Dendritic cell treated with granulocyte-macrophage colony-stimulating factor and Interleukin-4, amounts not matched to agents 40 ng/mL and 50 ng/mL, for 4 days (primary cell): ENCODE measurements at regions of chr10 and their contacts with region 1.

Region 1: GRCh38 chr10:48608279-48608681 is 3.4 kb upstream of the ARHGAP22 start:
- H3K4me3 Mint-ChIP-seq: no peak overlapping the region
- H3K27ac Mint-ChIP-seq: peak overlapping the region; percentile 43
- H3K4me1 Mint-ChIP-seq: peaks cover 91% of the 10 kb centered on the region
- H3K27me3 Mint-ChIP-seq: peaks cover 5% of the 10 kb centered on the region

Region 2: GRCh38 chr10:48551861-48552591 is 56.3 kb before region 1 on chr10:
- intact Hi-C with region 1: loop called (anchors 2 kb)
- H3K4me3 Mint-ChIP-seq: no peak overlapping the region
- H3K27ac Mint-ChIP-seq: peak overlapping the region; percentile 47
- H3K4me1 Mint-ChIP-seq: peaks cover 29% of the 10 kb centered on the region
- H3K27me3 Mint-ChIP-seq: peaks cover 10% of the 10 kb centered on the region

Region 3: GRCh38 chr10:48572414-48572813 is 35.9 kb before region 1 on chr10:
- intact Hi-C with region 1: loop called (anchors 5 kb)
- H3K4me3 Mint-ChIP-seq: no peak overlapping the region
- H3K27ac Mint-ChIP-seq: no peak overlapping the region
- H3K4me1 Mint-ChIP-seq: peaks cover 53% of the 10 kb centered on the region
- H3K27me3 Mint-ChIP-seq: peaks cover 2% of the 10 kb centered on the region

Region 4: DNA sequence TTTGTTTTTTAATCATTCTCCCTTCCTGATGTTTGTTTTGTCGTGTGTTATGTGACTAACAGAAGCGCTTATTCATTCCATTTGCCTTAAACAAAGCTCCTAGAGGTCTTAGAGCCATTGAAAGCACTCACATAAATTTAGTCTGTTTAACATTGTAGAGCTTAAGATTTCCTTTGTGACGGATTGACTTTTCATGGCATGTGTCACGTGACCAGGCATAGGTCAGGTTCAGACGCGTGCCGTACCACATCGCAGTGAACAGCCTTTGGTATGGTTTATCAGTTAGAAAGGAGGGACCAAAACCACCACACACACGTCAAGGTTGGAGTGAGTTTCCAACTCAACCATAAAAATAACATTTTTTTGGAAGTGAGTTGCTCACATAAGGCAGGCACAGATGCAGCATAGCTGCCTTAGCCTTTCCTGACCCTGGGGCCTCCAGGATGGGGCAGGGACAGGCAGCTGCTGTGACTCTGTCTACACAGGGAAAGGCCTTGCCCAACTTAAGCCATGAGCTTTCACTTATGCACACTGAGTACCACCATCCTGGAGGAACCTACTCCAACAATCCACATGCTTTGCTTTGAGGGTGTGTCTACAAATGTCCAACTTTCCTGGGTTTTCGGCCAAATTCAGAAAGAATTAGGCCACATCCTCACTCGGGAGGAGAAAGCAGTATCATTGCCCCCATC is 131.9 kb after region 1 on chr10:
- intact Hi-C with region 1: no loop called
- H3K4me3 Mint-ChIP-seq: no peak overlapping the region
- H3K27ac Mint-ChIP-seq: no peak overlapping the region
- H3K4me1 Mint-ChIP-seq: peaks cover 32% of the 10 kb centered on the region
- H3K27me3 Mint-ChIP-seq: no peaks in the 10 kb centered on the region

Region 5: DNA sequence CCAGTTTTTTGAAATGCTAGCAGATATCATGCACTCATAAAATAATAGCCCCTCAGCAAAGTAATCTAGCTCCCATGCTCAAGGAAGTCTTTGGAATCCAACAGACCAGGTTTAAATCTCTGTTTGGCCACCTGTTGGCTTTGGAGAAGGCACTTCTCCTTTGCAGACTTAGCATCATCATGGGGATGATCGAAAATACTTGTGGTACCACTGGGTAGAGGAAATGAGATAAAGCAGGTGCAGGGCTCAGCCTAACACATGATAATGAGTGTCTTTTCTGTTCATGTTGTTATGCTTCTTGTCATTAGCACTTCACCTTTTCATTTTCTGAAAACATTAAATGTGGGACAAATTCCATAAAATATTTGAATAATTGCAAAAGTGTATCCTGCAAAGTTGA is 264.0 kb after region 1 on chr10:
- intact Hi-C with region 1: no loop called
- H3K4me3 Mint-ChIP-seq: no peak overlapping the region
- H3K27ac Mint-ChIP-seq: no peak overlapping the region
- H3K4me1 Mint-ChIP-seq: no peaks in the 10 kb centered on the region
- H3K27me3 Mint-ChIP-seq: no peaks in the 10 kb centered on the region